ENCODE measurements at regions of chr1 and their contacts with region 1.

Region 1: GRCh38 chr1:233240829-233241682 is 54.5 kb downstream of the PCNX2 start:
- DNase-seq: peak; percentile 64 to 66
- H3K4me3 ChIP-seq: no peak overlapping the region
- H3K4me3 Mint-ChIP-seq: peak overlapping the region; percentile 33
- H3K27ac Mint-ChIP-seq: peak overlapping the region; percentile 35
- H3K4me1 ChIP-seq: peaks cover 47% of the 10 kb centered on the region
- H3K4me1 Mint-ChIP-seq: peaks cover 25% of the 10 kb centered on the region
- H3K27me3 ChIP-seq: no peaks in the 10 kb centered on the region
- H3K27me3 Mint-ChIP-seq: no peaks in the 10 kb centered on the region
- CTCF ChIP-seq: peak; percentile 57 to 83

Region 2: DNA sequence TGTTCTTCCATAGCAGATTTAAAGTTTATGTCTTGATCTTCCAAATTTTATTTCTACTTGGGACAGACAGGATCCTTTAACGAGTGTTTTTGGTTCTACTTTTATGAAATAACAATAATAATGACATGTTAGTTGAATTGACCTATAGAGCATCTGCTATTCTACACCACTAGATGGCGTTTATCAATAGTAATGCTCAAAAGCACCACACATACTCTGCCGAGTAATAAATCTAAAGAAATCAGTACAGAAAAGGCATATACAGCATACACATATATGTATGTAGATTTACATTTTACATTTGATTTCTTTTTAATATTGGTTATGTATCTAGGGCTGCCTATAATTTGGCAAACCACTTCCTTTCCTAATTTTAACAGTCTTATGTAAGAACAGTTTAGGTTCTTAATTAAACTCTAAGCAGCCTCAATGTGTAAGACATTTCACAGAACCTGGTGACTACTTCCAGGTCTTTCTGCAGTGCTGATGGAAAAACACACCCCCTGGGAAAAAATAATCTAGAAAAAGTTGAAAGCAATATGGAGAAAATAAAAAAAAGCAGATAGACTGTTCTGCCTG is 605.2 kb before region 1 on chr1:
- CTCF ChIA-PET with region 1: no interaction called
- POLR2A ChIA-PET with region 1: no interaction called
- intact Hi-C with region 1: loop called (anchors 1 kb)
- DNase-seq: peak in 1 of 2 experiments; percentile 23
- H3K4me3 ChIP-seq: no peak overlapping the region
- H3K4me3 Mint-ChIP-seq: no peak overlapping the region
- H3K27ac Mint-ChIP-seq: no peak overlapping the region
- H3K4me1 ChIP-seq: peaks cover 5% of the 10 kb centered on the region; the same call in 1 of the 2 replicates
- H3K4me1 Mint-ChIP-seq: no peaks in the 10 kb centered on the region
- H3K27me3 ChIP-seq: no peaks in the 10 kb centered on the region; the same call in 1 of the 2 replicates
- H3K27me3 Mint-ChIP-seq: no peaks in the 10 kb centered on the region
- CTCF ChIP-seq: peak; percentile 63 to 65

Region 3: GRCh38 chr1:233025157-233025915 is 215.7 kb before region 1 on chr1:
- CTCF ChIA-PET with region 1: no interaction called
- POLR2A ChIA-PET with region 1: no interaction called
- intact Hi-C with region 1: loop called (anchors 1 kb)
- DNase-seq: peak; percentile 82 to 83
- H3K4me3 ChIP-seq: no peak overlapping the region
- H3K4me3 Mint-ChIP-seq: no peak overlapping the region
- H3K27ac Mint-ChIP-seq: no peak overlapping the region
- H3K4me1 ChIP-seq: peaks cover 6% of the 10 kb centered on the region; the same call in 1 of the 2 replicates
- H3K4me1 Mint-ChIP-seq: peaks cover 23% of the 10 kb centered on the region
- H3K27me3 ChIP-seq: no peaks in the 10 kb centered on the region
- H3K27me3 Mint-ChIP-seq: peaks cover 7% of the 10 kb centered on the region
- CTCF ChIP-seq: peak; percentile 74 to 94

Region 4: GRCh38 chr1:233113009-233113879 is 127.8 kb before region 1 on chr1:
- CTCF ChIA-PET with region 1: no interaction called
- POLR2A ChIA-PET with region 1: no interaction called
- intact Hi-C with region 1: loop called (anchors 1 kb)
- DNase-seq: peak; percentile 56 to 57
- H3K4me3 ChIP-seq: no peak overlapping the region
- H3K4me3 Mint-ChIP-seq: no peak overlapping the region
- H3K27ac Mint-ChIP-seq: peak overlapping the region; percentile 54
- H3K4me1 ChIP-seq: peaks cover 12% of the 10 kb centered on the region
- H3K4me1 Mint-ChIP-seq: no peaks in the 10 kb centered on the region
- H3K27me3 ChIP-seq: no peaks in the 10 kb centered on the region
- H3K27me3 Mint-ChIP-seq: no peaks in the 10 kb centered on the region
- CTCF ChIP-seq: no peak

Region 5: DNA sequence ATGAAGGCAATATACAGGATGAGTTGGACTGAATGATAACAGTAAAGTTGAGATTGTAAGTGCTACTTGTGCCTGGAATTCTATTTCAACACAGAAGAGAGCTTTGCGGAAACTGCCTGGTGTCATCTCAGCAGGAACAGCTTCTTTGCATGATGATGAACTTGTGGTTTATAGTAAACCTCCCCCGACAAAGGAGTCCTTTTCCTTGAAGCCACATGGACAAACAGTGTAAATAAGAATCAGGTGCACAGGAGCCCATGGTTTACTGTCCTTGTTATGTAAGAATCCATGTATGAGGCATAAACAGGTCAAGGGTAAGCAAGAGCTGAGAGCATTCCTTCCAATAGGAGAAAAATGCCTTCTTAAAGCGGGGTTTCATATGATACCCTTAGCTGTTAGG is 11.8 kb before region 1 on chr1:
- CTCF ChIA-PET with region 1: interaction called, 13 read pairs
- POLR2A ChIA-PET with region 1: no interaction called
- intact Hi-C with region 1: no loop called
- DNase-seq: no peak
- H3K4me3 ChIP-seq: no peak overlapping the region
- H3K4me3 Mint-ChIP-seq: no peak overlapping the region
- H3K27ac Mint-ChIP-seq: no peak overlapping the region
- H3K4me1 ChIP-seq: peaks cover 11% of the 10 kb centered on the region
- H3K4me1 Mint-ChIP-seq: peaks cover 18% of the 10 kb centered on the region
- H3K27me3 ChIP-seq: no peaks in the 10 kb centered on the region
- H3K27me3 Mint-ChIP-seq: no peaks in the 10 kb centered on the region
- CTCF ChIP-seq: no peak

Measured in Caco-2 (cell line).